ENCODE measurements at regions of chr9 and their contacts with region 1.

Region 1: DNA sequence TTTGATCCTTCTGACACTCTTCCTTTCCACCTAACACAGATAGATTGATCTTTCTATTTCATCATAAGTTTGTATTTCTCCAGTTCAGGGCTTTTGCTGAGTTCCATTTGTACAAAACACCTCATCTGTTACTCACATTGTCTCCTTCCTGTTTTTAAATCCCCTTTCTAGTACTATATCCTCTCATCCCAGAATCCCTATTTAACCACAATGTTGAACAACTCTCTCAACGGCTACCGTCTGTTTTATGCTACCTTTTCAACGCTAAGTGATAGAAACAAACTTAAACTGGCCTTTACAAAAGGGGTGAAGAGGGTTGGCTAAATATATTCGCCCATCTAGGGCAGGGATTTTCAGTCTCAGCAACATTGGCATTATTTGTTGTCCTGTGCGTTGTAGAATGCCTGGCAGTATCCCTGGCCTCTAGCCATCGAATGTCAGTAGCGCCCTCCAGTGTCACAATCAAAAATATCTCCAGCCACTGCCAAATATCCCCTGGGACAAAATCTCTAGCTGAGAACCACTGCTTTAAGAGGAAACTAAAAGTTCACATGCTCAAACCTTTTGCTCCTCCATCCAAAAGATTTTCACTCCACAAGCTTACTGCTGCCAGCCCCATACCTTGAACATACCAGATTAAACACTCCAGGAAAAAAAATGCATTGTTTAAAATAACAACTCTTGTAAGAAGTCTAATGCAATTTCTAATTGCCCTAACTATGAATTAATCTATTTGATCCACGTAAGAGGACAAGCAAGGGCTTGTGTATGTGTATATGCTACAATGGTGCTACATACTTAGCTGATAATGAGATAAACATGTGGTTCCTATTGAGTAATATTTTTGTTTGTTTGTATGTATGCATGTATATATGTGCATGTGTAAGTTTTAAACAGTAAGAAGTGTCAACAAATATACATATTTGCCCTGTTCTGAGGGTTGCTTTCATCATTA is 344.0 kb downstream of the PTPRD start:
- DNase-seq: peak; percentile 26
- ATAC-seq: peak; percentile 59
- H3K4me3 ChIP-seq: no peak overlapping the region
- H3K27ac ChIP-seq: no peak overlapping the region
- H3K4me1 ChIP-seq: no peaks in the 10 kb centered on the region
- H3K27me3 ChIP-seq: no peaks in the 10 kb centered on the region
- CTCF ChIP-seq: peak; percentile 39; the same call in 1 of the 2 replicates

Region 2: DNA sequence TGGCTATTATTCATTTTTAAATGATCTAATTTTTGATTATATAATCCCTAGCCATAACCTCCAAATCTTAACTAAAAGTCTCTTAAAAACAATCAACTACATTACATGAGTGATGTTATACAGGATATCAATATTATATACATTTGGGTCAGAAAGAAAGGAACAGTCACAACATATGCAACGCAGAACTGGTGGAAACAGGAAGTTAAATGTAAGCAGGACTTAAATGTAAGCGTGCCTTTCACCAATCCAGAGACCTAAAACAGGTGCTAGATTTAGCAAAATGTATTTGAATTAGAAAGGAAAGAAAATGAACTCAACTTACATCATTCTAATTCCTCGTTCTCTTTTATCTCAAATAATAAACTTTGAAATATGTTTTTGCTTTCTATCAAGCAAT is 394.5 kb before region 1 on chr9:
- CTCF ChIA-PET with region 1: no interaction called
- POLR2A ChIA-PET with region 1: no interaction called
- intact Hi-C with region 1: no loop called
- DNase-seq: no peak
- ATAC-seq: no peak
- H3K4me3 ChIP-seq: no peak overlapping the region
- H3K27ac ChIP-seq: no peak overlapping the region
- H3K4me1 ChIP-seq: no peaks in the 10 kb centered on the region
- H3K27me3 ChIP-seq: no peaks in the 10 kb centered on the region
- CTCF ChIP-seq: no peak

Region 3: DNA sequence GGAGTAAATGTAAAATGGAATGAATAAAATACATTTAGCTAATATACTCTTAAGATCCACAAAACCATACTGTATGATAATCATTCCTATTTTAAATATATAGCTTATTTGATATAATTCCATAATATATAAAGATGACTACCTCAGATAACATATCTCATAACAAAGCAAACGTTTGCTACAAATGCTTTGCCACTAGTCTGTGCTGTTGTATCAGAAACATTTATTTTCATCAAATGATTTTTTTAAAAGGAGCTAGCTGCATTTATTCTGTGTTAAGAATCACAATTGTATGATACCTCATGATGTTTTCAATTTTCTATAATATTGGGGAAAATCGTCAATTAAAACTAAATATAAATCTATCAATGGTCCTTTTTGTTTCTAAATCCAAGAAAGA is 223.2 kb before region 1 on chr9:
- CTCF ChIA-PET with region 1: interaction called, 8 read pairs
- POLR2A ChIA-PET with region 1: no interaction called
- intact Hi-C with region 1: loop called (anchors 2 kb)
- DNase-seq: peak; percentile 28
- ATAC-seq: peak; percentile 24; the same call in 1 of the 2 replicates
- H3K4me3 ChIP-seq: no peak overlapping the region
- H3K27ac ChIP-seq: no peak overlapping the region
- H3K4me1 ChIP-seq: no peaks in the 10 kb centered on the region
- H3K27me3 ChIP-seq: no peaks in the 10 kb centered on the region
- CTCF ChIP-seq: peak; percentile 42

Region 4: GRCh38 chr9:10059044-10059443 is 209.8 kb before region 1 on chr9:
- CTCF ChIA-PET with region 1: no interaction called
- POLR2A ChIA-PET with region 1: interaction called, 3 read pairs
- intact Hi-C with region 1: loop called (anchors 1 kb)
- DNase-seq: no peak
- ATAC-seq: no peak
- H3K4me3 ChIP-seq: no peak overlapping the region
- H3K27ac ChIP-seq: no peak overlapping the region
- H3K4me1 ChIP-seq: no peaks in the 10 kb centered on the region
- H3K27me3 ChIP-seq: no peaks in the 10 kb centered on the region
- CTCF ChIP-seq: no peak

Region 5: GRCh38 chr9:10212702-10213101 is 56.1 kb before region 1 on chr9:
- CTCF ChIA-PET with region 1: no interaction called
- POLR2A ChIA-PET with region 1: no interaction called
- intact Hi-C with region 1: loop called (anchors 10 kb)
- DNase-seq: no peak
- ATAC-seq: no peak
- H3K4me3 ChIP-seq: no peak overlapping the region
- H3K27ac ChIP-seq: no peak overlapping the region
- H3K4me1 ChIP-seq: no peaks in the 10 kb centered on the region
- H3K27me3 ChIP-seq: no peaks in the 10 kb centered on the region
- CTCF ChIP-seq: no peak

Region 6: DNA sequence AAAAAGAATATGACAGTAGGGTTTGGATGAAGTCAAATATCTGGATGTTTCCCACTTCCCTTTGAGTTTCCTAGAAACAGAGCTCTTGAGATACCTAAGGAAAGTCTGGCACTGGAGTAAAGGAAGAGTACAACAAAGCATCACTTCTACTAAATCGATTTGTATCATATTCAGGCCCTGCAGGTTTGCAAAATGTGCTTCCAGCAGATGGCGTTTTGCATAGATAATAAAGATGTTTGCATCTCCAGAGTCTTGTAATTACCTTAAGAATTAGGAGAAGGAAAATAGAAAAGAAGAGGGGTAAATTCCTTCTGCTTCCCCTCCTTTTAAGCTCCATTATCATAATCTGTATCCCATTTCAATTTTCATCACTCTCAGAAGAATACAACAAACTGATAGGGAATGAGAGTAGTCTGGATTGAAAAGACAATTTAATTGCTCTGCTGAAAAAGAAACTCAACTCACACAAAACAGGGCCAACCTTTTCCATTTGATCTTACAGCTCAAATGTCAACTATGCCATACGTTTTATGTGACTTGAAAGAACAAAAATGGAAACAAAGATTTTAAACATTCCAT is 36.4 kb before region 1 on chr9:
- CTCF ChIA-PET with region 1: no interaction called
- POLR2A ChIA-PET with region 1: no interaction called
- intact Hi-C with region 1: loop called (anchors 5 kb)
- DNase-seq: peak; percentile 5
- ATAC-seq: peak; percentile 43; the same call in 1 of the 2 replicates
- H3K4me3 ChIP-seq: no peak overlapping the region
- H3K27ac ChIP-seq: no peak overlapping the region
- H3K4me1 ChIP-seq: no peaks in the 10 kb centered on the region
- H3K27me3 ChIP-seq: no peaks in the 10 kb centered on the region
- CTCF ChIP-seq: peak; percentile 37; the same call in 1 of the 2 replicates